ENCODE measurements at regions of chr14 and their contacts with region 1.

Region 1: DNA sequence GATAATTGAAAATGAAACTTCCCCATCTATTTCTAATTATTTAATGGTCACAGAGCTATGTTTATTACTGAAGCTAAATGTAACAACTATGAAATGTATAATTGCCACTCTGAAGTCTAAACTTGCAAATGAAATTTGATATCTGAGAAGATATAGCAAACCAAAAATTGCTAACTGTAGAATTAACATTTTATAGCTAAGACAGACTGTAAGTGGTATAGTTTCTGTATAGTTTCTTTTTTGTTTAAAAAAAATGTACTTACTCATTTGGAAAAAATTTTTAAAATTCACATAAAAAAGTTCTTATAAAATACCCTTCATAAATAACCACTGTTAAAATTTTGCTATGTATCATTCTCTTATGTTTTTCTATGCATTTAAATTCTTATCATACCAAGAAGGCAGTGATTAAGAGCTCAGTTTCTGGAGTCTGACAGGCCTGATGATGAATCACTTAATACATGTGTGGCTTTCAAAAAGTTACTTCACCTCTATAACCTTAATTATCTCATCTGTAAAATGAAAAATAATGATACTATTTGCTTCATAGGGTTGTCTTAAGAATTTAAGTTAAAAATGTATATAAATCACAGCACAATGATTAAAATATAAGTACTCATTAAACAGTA is 214.7 kb upstream of the GARIN2 start:
- DNase-seq: peak; percentile 59
- ATAC-seq: peak; percentile 87
- H3K4me3 ChIP-seq: no peak overlapping the region
- H3K27ac ChIP-seq: no peak overlapping the region
- H3K4me1 ChIP-seq: peaks cover 22% of the 10 kb centered on the region
- H3K27me3 ChIP-seq: no peaks in the 10 kb centered on the region
- CTCF ChIP-seq: no peak

Region 2: DNA sequence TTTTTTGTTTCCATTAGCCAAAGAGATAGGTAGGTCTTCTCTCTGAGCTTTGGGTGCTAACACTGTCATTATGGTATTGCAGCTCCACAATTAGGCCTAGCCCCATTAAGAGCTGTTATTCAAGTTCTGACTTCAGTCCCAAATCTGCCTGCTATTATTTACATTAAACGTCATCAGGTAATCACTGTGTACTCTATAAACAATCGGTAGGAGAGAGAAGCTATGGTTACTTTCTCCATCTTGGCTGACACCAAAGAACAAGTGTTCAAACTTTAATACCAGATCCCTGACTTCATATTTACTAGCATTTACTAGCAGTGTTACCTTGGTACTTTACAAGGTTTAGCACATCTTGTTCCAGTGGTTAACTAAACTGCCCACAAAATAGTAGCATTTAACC is 90.4 kb before region 1 on chr14:
- CTCF ChIA-PET with region 1: no interaction called
- POLR2A ChIA-PET with region 1: no interaction called
- intact Hi-C with region 1: no loop called
- DNase-seq: peak; percentile 47
- ATAC-seq: peak; percentile 69
- H3K4me3 ChIP-seq: no peak overlapping the region
- H3K27ac ChIP-seq: peak overlapping the region; percentile 42
- H3K4me1 ChIP-seq: peaks cover 13% of the 10 kb centered on the region
- H3K27me3 ChIP-seq: no peaks in the 10 kb centered on the region
- CTCF ChIP-seq: no peak

Region 3: DNA sequence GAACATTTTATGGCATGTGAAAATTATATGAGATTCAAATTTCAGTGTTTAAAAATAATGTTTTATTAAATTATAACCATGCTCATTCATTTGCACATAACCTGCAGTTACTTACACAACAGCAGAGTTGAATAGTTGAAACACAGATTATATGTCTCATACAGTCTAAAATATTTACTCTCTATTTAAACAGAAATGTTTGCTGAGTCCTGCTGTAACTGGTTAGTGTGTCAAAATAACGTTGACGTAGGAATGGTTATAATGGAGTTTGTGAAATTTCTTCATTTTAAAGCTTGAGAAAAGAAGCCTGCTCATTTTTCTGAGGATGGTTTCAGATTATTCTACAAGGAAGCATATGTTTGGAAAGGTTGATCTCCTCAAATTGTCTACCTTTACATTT is 18.3 kb after region 1 on chr14:
- CTCF ChIA-PET with region 1: no interaction called
- POLR2A ChIA-PET with region 1: interaction called, 25 read pairs
- intact Hi-C with region 1: no loop called
- DNase-seq: no peak
- ATAC-seq: peak; percentile 37; the same call in 1 of the 2 replicates
- H3K4me3 ChIP-seq: no peak overlapping the region
- H3K27ac ChIP-seq: no peak overlapping the region
- H3K4me1 ChIP-seq: no peaks in the 10 kb centered on the region
- H3K27me3 ChIP-seq: no peaks in the 10 kb centered on the region
- CTCF ChIP-seq: no peak

Region 4: GRCh38 chr14:67004521-67004920 is 30.0 kb after region 1 on chr14:
- CTCF ChIA-PET with region 1: no interaction called
- POLR2A ChIA-PET with region 1: no interaction called
- intact Hi-C with region 1: loop called (anchors 1 kb)
- DNase-seq: no peak
- ATAC-seq: no peak
- H3K4me3 ChIP-seq: no peak overlapping the region
- H3K27ac ChIP-seq: no peak overlapping the region
- H3K4me1 ChIP-seq: peaks cover 15% of the 10 kb centered on the region
- H3K27me3 ChIP-seq: no peaks in the 10 kb centered on the region
- CTCF ChIP-seq: no peak